ENCODE measurements at regions of chr22 and their contacts with region 1.

Region 1: GRCh38 chr22:37643225-37643847 is 3.9 kb downstream of the SH3BP1 start:
- DNase-seq: peak; percentile 82 to 94
- ATAC-seq: peak; percentile 22

Region 2: GRCh38 chr22:37797874-37798500 is 154.7 kb after region 1 on chr22:
- intact Hi-C with region 1: loop called in 1 of 2 experiments (anchors 10 kb)
- DNase-seq: no peak
- ATAC-seq: no peak

Measured in left colon (tissue), 2 donors.